CD4-positive, alpha-beta memory T cell (primary cell): ENCODE measurements at regions of chr5 and their contacts with region 1.

Region 1: DNA sequence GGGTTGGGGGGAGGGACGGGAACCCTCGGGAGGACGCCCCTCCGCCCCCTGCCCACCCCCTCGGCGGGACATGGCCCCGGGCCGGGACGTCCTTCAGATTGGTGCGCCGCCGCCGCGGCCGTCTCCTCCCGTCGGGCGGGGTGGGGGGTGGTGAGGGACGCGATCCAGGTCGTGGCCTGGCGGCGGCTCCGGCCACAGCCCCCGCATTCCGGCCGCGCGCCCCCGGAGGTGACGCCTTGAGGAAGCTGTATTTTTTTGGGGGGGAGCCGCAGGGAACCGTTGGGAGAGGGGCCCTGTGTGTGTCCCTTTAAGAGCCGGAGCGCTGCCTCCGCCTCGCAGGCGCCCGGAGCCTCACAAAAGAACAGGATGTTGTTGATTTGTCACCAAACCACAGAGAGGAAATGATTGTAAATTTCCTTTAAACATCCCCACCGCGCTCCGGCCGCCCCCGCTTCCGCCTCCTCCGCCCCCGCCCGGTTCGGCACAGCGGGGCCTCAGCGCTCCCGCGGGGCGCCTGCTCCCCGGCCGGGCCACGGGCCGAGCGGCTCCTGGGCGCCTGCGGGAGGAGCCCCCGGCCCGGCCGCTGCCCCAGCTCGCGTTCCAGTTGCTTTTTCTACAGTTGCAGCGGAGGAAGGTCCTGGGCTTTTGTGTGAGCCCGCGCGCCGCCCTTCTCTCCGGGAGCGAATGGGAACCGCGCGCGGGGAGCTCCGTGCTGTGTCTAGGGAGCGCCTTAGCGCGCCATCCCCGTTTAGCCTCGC is 32.1 kb upstream of the SPRY4 start:
- DNase-seq: peak; percentile 86 to 91 (median 89)
- H3K4me3 ChIP-seq: peak overlapping the region; percentile 38 to 84
- H3K4me3 Mint-ChIP-seq: peak overlapping the region; percentile 88 to 93 (median 89)
- H3K27ac ChIP-seq: peak overlapping the region; percentile 68
- H3K27ac Mint-ChIP-seq: peak overlapping the region; percentile 88 to 95 (median 93)
- H3K4me1 ChIP-seq: peaks cover 47% of the 10 kb centered on the region
- H3K4me1 Mint-ChIP-seq: peaks cover 41 to 67% (median 48%) of the 10 kb centered on the region in 4 donors
- H3K27me3 ChIP-seq: no peaks in the 10 kb centered on the region
- H3K27me3 Mint-ChIP-seq: no peaks in the 10 kb centered on the region

Region 2: DNA sequence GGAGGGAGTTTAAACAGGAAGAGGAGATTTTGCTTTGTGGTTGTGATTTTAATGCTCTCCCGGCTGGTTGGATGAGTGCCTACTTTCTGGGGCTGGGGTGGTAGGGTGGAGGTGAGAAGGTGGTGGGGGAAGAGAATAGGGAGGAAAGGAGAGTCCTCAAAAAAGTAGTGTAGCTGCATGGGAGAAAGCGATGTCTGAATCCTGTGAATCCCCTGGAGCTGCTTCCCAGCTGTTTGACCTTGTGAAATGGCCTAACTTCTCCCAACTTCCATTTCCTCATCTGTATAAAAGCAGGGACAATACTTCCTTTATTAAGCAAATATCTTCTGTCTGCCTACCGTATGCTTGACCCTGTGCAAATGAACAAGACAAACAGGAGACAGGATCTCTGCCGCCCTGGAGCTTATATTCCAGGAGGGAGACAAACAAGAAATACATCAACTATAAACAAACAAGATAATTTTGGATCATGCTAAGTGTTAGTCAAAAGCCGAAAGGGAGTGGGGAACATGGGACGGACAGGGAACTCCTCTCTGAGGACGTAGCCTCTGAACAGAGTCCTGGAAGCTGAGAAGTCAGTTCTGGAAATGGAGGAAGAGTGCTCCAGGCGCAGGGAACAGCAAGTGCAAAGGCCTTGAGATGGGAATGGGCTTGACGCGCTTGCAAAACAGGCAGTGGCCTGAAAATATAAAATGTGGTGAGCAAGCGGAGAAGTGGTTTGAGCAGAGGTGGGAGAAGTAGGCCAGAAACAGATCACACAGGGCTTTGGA is 135.6 kb before region 1 on chr5:
- CTCF ChIA-PET with region 1: no interaction called
- POLR2A ChIA-PET with region 1: interaction called, 11 read pairs
- intact Hi-C with region 1: loop called (anchors 1 kb)
- DNase-seq: no peak
- H3K4me3 ChIP-seq: no peak overlapping the region
- H3K4me3 Mint-ChIP-seq: no peak overlapping the region
- H3K27ac ChIP-seq: no peak overlapping the region
- H3K27ac Mint-ChIP-seq: peak overlapping the region in 4 of 7 donors; percentile 6 to 58 (median 45)
- H3K4me1 ChIP-seq: peaks cover 32% of the 10 kb centered on the region
- H3K4me1 Mint-ChIP-seq: peaks cover 22 to 44% (median 33%) of the 10 kb centered on the region in 4 donors
- H3K27me3 ChIP-seq: no peaks in the 10 kb centered on the region
- H3K27me3 Mint-ChIP-seq: no peaks in the 10 kb centered on the region

Region 3: GRCh38 chr5:142324871-142325724 is 31.8 kb before region 1 on chr5 and contains the start of gene SPRY4:
- CTCF ChIA-PET with region 1: no interaction called
- POLR2A ChIA-PET with region 1: interaction called, 6 read pairs
- intact Hi-C with region 1: loop called (anchors 1 kb)
- DNase-seq: peak; percentile 74 to 81 (median 80)
- H3K4me3 ChIP-seq: peak within 1 kb of the TSS; percentile 39 to 50
- H3K4me3 Mint-ChIP-seq: peak within 1 kb of the TSS; percentile 83 to 95 (median 88)
- H3K27ac ChIP-seq: no peak within 1 kb of the TSS
- H3K27ac Mint-ChIP-seq: peak within 1 kb of the TSS in 3 of 7 donors; percentile 73 to 88 (median 76)
- H3K4me1 ChIP-seq: peaks cover 29% of the 10 kb centered on the region
- H3K4me1 Mint-ChIP-seq: peaks cover 9 to 34% (median 20%) of the 10 kb centered on the region in 4 donors
- H3K27me3 ChIP-seq: peaks cover 15% of the 10 kb centered on the region
- H3K27me3 Mint-ChIP-seq: peaks cover 24 to 36% of the 10 kb centered on the region in 2 donors
- total RNA-seq, gene SPRY4: not detected

Region 4: DNA sequence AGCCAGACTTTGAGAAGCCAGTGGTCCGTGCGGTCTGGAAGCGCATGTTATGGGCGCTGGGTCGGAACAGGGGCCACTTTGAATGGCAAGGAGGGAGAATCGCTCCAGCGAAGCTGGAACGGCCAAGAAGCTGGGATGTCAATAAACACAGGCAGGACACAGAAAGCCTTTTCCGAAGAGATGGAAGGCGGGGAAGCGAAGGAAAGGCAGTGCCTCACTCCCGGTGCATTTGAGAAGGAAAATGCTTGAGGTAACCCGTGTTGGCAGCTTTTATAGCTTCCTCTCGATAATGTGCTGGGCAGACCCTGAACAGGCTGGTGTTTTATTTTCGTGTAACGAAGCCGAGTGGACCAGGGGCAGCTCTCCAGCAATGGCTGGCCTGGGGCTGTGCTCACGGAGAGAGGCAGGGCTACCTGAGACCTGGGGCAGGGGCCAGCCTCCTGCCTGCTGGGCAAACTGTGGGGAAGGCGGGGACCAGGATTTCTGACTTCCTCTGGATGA is 52.1 kb after region 1 on chr5:
- CTCF ChIA-PET with region 1: no interaction called
- POLR2A ChIA-PET with region 1: no interaction called
- intact Hi-C with region 1: no loop called
- DNase-seq: no peak
- H3K4me3 ChIP-seq: no peak overlapping the region
- H3K4me3 Mint-ChIP-seq: no peak overlapping the region
- H3K27ac ChIP-seq: no peak overlapping the region
- H3K27ac Mint-ChIP-seq: no peak overlapping the region
- H3K4me1 ChIP-seq: no peaks in the 10 kb centered on the region
- H3K4me1 Mint-ChIP-seq: peaks cover 0 to 2% (median under 1%) of the 10 kb centered on the region in 4 donors
- H3K27me3 ChIP-seq: no peaks in the 10 kb centered on the region
- H3K27me3 Mint-ChIP-seq: no peaks in the 10 kb centered on the region

Region 5: DNA sequence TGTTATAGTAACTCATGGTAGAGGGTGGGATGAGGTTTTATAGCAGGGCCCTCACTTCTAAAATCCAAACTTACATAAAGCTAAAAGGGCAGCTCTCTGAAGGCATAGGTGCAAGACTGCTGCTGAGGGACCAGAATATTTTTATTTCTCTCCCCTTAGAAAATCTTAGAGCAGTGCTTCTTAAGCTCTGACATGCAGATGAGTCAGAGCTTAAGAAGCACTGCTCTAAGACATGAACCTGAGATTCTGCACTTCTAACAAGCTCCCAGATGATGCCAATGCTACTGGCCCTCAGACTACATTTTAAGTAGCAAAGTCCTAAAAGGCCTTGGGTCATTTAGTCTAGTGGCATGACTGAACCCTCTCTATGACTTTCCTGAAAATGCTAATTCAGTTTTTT is 65.5 kb after region 1 on chr5:
- CTCF ChIA-PET with region 1: no interaction called
- POLR2A ChIA-PET with region 1: interaction called, 11 read pairs
- intact Hi-C with region 1: no loop called
- DNase-seq: no peak
- H3K4me3 ChIP-seq: no peak overlapping the region
- H3K4me3 Mint-ChIP-seq: peak overlapping the region in 2 of 8 donors; percentile 21 to 31
- H3K27ac ChIP-seq: no peak overlapping the region
- H3K27ac Mint-ChIP-seq: peak overlapping the region in 2 of 7 donors; percentile 38 to 56
- H3K4me1 ChIP-seq: peaks cover 71% of the 10 kb centered on the region
- H3K4me1 Mint-ChIP-seq: peaks cover 41 to 81% (median 62%) of the 10 kb centered on the region in 4 donors
- H3K27me3 ChIP-seq: no peaks in the 10 kb centered on the region
- H3K27me3 Mint-ChIP-seq: no peaks in the 10 kb centered on the region

Region 6: DNA sequence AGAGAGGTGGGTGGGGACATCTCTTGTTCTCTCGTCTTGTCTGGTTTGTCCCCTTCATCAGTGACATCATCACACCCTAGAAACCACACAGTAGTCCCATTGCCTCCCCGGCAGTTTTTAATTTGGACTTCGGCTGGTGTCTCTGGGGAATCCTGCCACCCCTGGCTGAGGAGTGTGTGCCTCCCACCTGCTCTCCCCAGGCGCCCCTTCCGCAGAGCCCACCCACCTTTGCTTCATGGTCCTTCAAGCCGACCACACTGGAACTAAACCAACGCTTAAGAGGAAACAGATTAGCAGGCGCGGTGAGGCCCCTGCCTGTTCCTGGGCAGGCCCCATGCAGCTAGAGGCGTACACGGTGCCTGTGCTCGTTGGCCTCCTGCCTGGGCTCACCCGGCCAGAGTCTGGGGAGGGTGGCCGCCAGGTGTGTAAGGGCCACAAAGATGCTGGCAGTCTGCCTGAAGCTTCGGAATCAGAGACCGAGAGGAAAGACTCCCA is 75.5 kb after region 1 on chr5:
- CTCF ChIA-PET with region 1: no interaction called
- POLR2A ChIA-PET with region 1: interaction called, 17 read pairs
- intact Hi-C with region 1: loop called (anchors 1 kb)
- DNase-seq: peak in 3 of 5 donors; percentile 31 to 71 (median 39)
- H3K4me3 ChIP-seq: peak overlapping the region in 1 of 2 donors; percentile 25
- H3K4me3 Mint-ChIP-seq: peak overlapping the region in 7 of 8 donors; percentile 68 to 87 (median 76)
- H3K27ac ChIP-seq: peak overlapping the region; percentile 62
- H3K27ac Mint-ChIP-seq: peak overlapping the region; percentile 92 to 99 (median 96)
- H3K4me1 ChIP-seq: peaks cover 61% of the 10 kb centered on the region
- H3K4me1 Mint-ChIP-seq: peaks cover 37 to 78% (median 56%) of the 10 kb centered on the region in 4 donors
- H3K27me3 ChIP-seq: no peaks in the 10 kb centered on the region
- H3K27me3 Mint-ChIP-seq: no peaks in the 10 kb centered on the region